Mucosa of descending colon (tissue), 3 donors: ENCODE measurements at regions of chr4 and their contacts with region 1.

Region 1: DNA sequence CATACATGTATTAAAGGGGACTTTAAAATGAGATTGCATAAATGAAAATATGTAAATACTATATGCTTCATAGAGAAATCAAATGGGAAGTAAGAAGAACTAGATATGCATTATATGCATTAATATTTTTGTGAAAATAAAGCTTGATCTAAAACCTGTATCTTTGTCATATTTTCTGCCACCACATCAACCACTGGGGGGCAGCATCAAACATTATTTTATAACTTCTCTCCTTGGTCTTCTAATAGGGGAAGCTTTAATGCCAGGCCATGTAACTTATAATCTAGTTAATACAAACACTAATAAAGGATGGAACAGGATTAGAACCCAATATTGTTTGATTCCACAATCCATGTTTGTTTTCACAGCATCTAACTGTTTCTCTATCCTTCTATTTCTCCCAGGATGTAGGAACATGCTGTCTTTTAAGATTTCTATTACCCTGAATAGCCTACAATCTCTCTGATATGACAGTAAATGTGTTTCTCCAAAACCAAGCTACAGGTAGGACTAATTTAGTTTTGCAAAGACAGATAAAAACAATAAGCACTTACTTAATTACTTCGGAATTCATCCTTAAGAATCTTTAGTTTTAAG is 10.0 kb downstream of the QRFPR start:
- DNase-seq: peak in 1 of 3 donors; percentile 72
- ATAC-seq: no peak
- H3K4me3 ChIP-seq: no peak overlapping the region
- H3K4me1 ChIP-seq: no peaks in the 10 kb centered on the region
- CTCF ChIP-seq: no peak

Region 2: GRCh38 chr4:121421594-121421993 is 50.8 kb after region 1 on chr4:
- intact Hi-C with region 1: loop called in 1 of 2 experiments (anchors 5 kb)
- DNase-seq: no peak
- ATAC-seq: no peak
- H3K4me3 ChIP-seq: no peak overlapping the region
- H3K4me1 ChIP-seq: no peaks in the 10 kb centered on the region
- CTCF ChIP-seq: no peak

Region 3: DNA sequence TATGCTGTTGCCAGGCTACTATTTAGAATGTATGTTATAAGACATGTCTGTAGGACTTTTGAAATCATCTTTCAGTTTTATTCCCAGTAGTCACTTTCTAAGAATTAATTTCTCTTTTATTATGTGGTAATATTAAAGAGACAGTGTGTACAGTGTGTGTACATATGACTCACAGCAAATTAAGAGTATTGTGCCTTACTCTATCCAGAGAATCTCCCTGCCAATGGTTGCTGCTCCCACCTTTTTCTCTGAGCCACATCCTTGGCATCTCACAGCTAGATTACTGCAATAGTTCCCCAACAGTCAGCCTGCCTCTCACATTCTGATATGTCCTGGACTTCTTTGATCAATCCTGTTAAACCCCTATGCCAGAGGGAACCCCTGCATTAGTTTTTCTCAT is 211.5 kb after region 1 on chr4:
- intact Hi-C with region 1: no loop called
- DNase-seq: no peak
- ATAC-seq: no peak
- H3K4me3 ChIP-seq: no peak overlapping the region
- H3K4me1 ChIP-seq: no peaks in the 10 kb centered on the region
- CTCF ChIP-seq: no peak